Calu3 (cell line): ENCODE measurements at regions of chr4 and their contacts with region 1.

Region 1: GRCh38 chr4:76430519-76431388 is 4.3 kb upstream of the SHROOM3 start:
- DNase-seq: peak; percentile 15
- H3K4me3 Mint-ChIP-seq: no peak overlapping the region
- H3K27ac Mint-ChIP-seq: no peak overlapping the region
- H3K4me1 Mint-ChIP-seq: peaks cover 16% of the 10 kb centered on the region
- H3K27me3 Mint-ChIP-seq: no peaks in the 10 kb centered on the region
- CTCF ChIP-seq: peak; percentile 36

Region 2: GRCh38 chr4:76504613-76505465 is 74.1 kb after region 1 on chr4:
- CTCF ChIA-PET with region 1: interaction called, 34 read pairs
- intact Hi-C with region 1: loop called (anchors 1 kb)
- DNase-seq: peak; percentile 20
- H3K4me3 Mint-ChIP-seq: no peak overlapping the region
- H3K27ac Mint-ChIP-seq: no peak overlapping the region
- H3K4me1 Mint-ChIP-seq: no peaks in the 10 kb centered on the region
- H3K27me3 Mint-ChIP-seq: no peaks in the 10 kb centered on the region
- CTCF ChIP-seq: no peak

Region 3: DNA sequence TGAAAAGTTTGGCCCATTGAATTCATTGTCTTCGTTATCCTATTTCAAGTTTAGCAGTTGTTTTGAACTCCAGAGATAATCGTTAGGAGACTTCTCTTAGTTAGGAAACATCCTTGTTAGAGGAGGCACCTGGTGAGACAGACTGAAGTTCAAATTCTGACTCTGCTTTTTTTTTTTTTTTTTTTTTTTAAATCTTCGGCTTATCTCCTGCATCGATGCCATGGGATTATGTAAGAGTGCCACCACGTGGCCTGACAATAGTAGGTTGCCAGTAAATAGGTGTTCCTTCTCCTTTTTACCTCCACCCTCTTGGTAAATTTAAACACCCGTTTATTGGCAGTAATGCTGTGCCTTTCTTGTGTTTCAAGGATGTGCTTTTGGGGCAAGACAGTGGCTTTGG is 317.9 kb after region 1 on chr4:
- CTCF ChIA-PET with region 1: no interaction called
- intact Hi-C with region 1: loop called (anchors 10 kb)
- DNase-seq: peak; percentile 37
- H3K4me3 Mint-ChIP-seq: no peak overlapping the region
- H3K27ac Mint-ChIP-seq: peak overlapping the region; percentile 66
- H3K4me1 Mint-ChIP-seq: peaks cover 29% of the 10 kb centered on the region
- H3K27me3 Mint-ChIP-seq: no peaks in the 10 kb centered on the region
- CTCF ChIP-seq: no peak